Left cardiac atrium (tissue), 4 donors: ENCODE measurements at regions of chr4 and their contacts with region 1.

Region 1: GRCh38 chr4:140641789-140642439 is 73.2 kb upstream of the UCP1 start:
- DNase-seq: peak; percentile 40
- ATAC-seq: peak; percentile 39 to 64

Region 2: GRCh38 chr4:140150886-140151698 is 490.8 kb before region 1 on chr4:
- intact Hi-C with region 1: no loop called
- DNase-seq: peak; percentile 92
- ATAC-seq: peak; percentile 70 to 86

Region 3: GRCh38 chr4:140568507-140569306 is 73.2 kb before region 1 on chr4 and contains the start of gene UCP1:
- intact Hi-C with region 1: no loop called
- DNase-seq: peak; percentile 26
- ATAC-seq: peak; percentile 76 to 88
- total RNA-seq, gene UCP1: 1.1 to 4.1 TPM

Region 4: GRCh38 chr4:140756319-140757231 is 114.7 kb after region 1 on chr4 and contains the start of gene TBC1D9:
- intact Hi-C with region 1: loop called in 1 of 2 experiments (anchors 5 kb)
- DNase-seq: peak; percentile 83
- ATAC-seq: peak; percentile 80 to 89
- total RNA-seq, gene TBC1D9: 15.6 to 17.2 TPM

Region 5: GRCh38 chr4:140790765-140791164 is 148.9 kb after region 1 on chr4:
- intact Hi-C with region 1: no loop called
- DNase-seq: peak; percentile 27
- ATAC-seq: peak; percentile 53 to 92

Region 6: GRCh38 chr4:140851032-140851636 is 209.2 kb after region 1 on chr4:
- intact Hi-C with region 1: loop called in 1 of 2 experiments (anchors 5 kb)
- DNase-seq: no peak
- ATAC-seq: peak; percentile 69 to 84